CD8-positive, alpha-beta T cell (primary cell): ENCODE measurements at regions of chr1 and their contacts with region 1.

Region 1: GRCh38 chr1:229889031-229889517 is 178.0 kb upstream of the GALNT2 start:
- DNase-seq: no peak
- ATAC-seq: no peak
- H3K4me3 ChIP-seq: no peak overlapping the region
- H3K4me3 Mint-ChIP-seq: no peak overlapping the region
- H3K27ac ChIP-seq: no peak overlapping the region
- H3K27ac Mint-ChIP-seq: no peak overlapping the region
- H3K4me1 ChIP-seq: no peaks in the 10 kb centered on the region
- H3K4me1 Mint-ChIP-seq: no peaks in the 10 kb centered on the region
- H3K27me3 ChIP-seq: peaks cover 0 to 3% of the 10 kb centered on the region in 2 experiments
- H3K27me3 Mint-ChIP-seq: peaks cover 5% of the 10 kb centered on the region
- CTCF ChIP-seq: no peak

Region 2: GRCh38 chr1:229907884-229908638 is 19.0 kb after region 1 on chr1:
- CTCF ChIA-PET with region 1: no interaction called
- POLR2A ChIA-PET with region 1: no interaction called
- intact Hi-C with region 1: loop called in 1 of 2 experiments (anchors 2 kb)
- DNase-seq: no peak
- ATAC-seq: no peak
- H3K4me3 ChIP-seq: no peak overlapping the region
- H3K4me3 Mint-ChIP-seq: no peak overlapping the region
- H3K27ac ChIP-seq: no peak overlapping the region
- H3K27ac Mint-ChIP-seq: no peak overlapping the region
- H3K4me1 ChIP-seq: no peaks in the 10 kb centered on the region
- H3K4me1 Mint-ChIP-seq: no peaks in the 10 kb centered on the region
- H3K27me3 ChIP-seq: no peaks in the 10 kb centered on the region
- H3K27me3 Mint-ChIP-seq: peaks cover 4% of the 10 kb centered on the region
- CTCF ChIP-seq: no peak

Region 3: DNA sequence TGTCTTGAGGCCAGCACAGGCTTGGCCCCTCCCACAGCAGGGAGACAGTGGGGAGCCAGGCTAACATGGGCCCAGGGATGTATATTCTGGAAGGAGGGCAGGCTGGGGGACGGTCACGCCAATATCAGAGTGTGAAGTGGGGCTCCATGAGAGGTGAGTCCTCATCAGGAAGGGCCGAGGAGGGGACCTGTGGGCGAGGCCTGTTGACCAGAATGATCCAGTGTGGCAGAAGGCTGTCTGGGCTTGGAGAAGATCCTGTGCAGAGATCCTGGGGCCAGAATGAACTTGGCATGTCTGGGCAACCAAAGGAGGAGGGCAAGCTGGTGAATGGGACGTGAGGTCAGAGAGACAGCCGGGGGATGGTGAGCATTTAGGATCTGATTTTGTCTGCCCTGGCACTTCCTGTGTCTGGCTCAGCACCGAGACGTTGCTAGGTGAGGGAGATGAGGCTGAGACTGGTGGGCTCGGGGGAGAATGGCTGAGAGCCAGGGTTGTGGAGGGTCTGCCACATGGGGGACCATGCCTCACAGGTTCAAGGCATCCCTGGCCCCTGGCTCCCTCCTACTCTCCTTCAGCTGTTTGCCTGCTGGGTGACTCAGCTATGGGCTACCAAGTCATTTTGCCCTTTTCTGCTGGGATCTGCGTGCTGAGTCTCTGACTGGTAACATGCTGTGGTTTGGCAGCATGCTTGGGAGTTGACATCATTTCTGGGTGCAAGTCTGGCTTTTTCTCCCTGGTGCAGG is 195.2 kb after region 1 on chr1:
- CTCF ChIA-PET with region 1: no interaction called
- POLR2A ChIA-PET with region 1: no interaction called
- intact Hi-C with region 1: no loop called
- DNase-seq: peak in 5 of 9 experiments; percentile 16 to 49 (median 28)
- ATAC-seq: peak; percentile 62
- H3K4me3 ChIP-seq: no peak overlapping the region
- H3K4me3 Mint-ChIP-seq: peak overlapping the region; percentile 18
- H3K27ac ChIP-seq: no peak overlapping the region
- H3K27ac Mint-ChIP-seq: peak overlapping the region; percentile 74
- H3K4me1 ChIP-seq: peaks cover 11% of the 10 kb centered on the region
- H3K4me1 Mint-ChIP-seq: peaks cover 75% of the 10 kb centered on the region
- H3K27me3 ChIP-seq: no peaks in the 10 kb centered on the region
- H3K27me3 Mint-ChIP-seq: no peaks in the 10 kb centered on the region
- CTCF ChIP-seq: no peak